Kidney (tissue), 22 donors: ENCODE measurements at regions of chr12 and their contacts with region 1.

Region 1: DNA sequence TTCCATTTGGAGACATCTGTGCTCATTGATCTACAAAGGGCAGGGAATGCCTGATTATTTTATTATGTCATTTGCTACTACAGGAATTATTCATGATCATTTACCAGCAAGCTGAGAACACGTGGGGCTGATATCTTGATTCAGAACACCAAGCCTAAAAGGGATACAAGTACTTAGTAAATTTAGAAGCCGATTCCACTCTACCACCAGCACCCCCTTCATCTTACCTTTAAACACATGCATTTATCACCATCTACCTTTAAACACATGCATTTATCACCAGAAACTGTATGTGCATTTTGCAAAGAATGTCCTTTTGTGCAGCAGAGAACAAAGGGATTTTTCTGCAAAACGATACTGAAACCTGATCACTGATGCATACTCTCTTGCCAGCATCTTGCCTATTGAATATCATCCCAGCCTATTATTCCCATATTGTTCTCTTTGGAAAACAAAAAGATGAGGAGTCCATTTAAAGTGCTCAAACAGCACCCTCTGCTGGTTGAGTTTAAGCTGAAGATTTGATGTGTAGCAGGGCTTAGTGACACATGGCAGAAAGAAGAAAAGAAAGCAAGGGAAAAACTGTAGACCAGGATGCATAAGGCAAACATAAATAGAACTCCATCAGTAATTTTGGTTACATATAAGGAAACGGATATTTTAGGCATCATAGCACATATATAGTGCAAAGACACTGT is 132.6 kb upstream of the PLEKHG7 start:
- DNase-seq: peak in 4 of 5 donors; percentile 58 to 94 (median 77)
- H3K4me3 ChIP-seq: no peak overlapping the region
- H3K27ac ChIP-seq: no peak overlapping the region
- H3K4me1 ChIP-seq: peaks cover 2 to 6% (median 5%) of the 10 kb centered on the region in 3 donors
- H3K27me3 ChIP-seq: no peaks in the 10 kb centered on the region
- CTCF ChIP-seq: peak; percentile 91

Region 2: GRCh38 chr12:92145731-92146496 is 424.3 kb before region 1 on chr12 and contains the start of gene BTG1:
- intact Hi-C with region 1: loop called (anchors 10 kb)
- DNase-seq: peak; percentile 100
- H3K4me3 ChIP-seq: peak within 1 kb of the TSS; percentile 81 to 97 (median 89)
- H3K27ac ChIP-seq: peak within 1 kb of the TSS; percentile 98 to 99
- H3K4me1 ChIP-seq: no peaks in the 10 kb centered on the region
- H3K27me3 ChIP-seq: no peaks in the 10 kb centered on the region
- CTCF ChIP-seq: no peak
- total RNA-seq, gene BTG1: 173 TPM

Region 3: GRCh38 chr12:92170050-92170449 is 400.2 kb before region 1 on chr12:
- intact Hi-C with region 1: no loop called
- DNase-seq: no peak
- H3K4me3 ChIP-seq: no peak overlapping the region
- H3K27ac ChIP-seq: no peak overlapping the region
- H3K4me1 ChIP-seq: no peaks in the 10 kb centered on the region
- H3K27me3 ChIP-seq: no peaks in the 10 kb centered on the region
- CTCF ChIP-seq: no peak

Region 4: GRCh38 chr12:92485351-92486348 is 84.6 kb before region 1 on chr12:
- intact Hi-C with region 1: no loop called
- DNase-seq: peak in 1 of 5 donors; percentile 22
- H3K4me3 ChIP-seq: no peak overlapping the region
- H3K27ac ChIP-seq: peak overlapping the region; percentile 18 to 57
- H3K4me1 ChIP-seq: no peaks in the 10 kb centered on the region
- H3K27me3 ChIP-seq: no peaks in the 10 kb centered on the region
- CTCF ChIP-seq: no peak